Panc1 (cell line): ENCODE measurements at regions of chr5 and their contacts with region 1.

Region 1: DNA sequence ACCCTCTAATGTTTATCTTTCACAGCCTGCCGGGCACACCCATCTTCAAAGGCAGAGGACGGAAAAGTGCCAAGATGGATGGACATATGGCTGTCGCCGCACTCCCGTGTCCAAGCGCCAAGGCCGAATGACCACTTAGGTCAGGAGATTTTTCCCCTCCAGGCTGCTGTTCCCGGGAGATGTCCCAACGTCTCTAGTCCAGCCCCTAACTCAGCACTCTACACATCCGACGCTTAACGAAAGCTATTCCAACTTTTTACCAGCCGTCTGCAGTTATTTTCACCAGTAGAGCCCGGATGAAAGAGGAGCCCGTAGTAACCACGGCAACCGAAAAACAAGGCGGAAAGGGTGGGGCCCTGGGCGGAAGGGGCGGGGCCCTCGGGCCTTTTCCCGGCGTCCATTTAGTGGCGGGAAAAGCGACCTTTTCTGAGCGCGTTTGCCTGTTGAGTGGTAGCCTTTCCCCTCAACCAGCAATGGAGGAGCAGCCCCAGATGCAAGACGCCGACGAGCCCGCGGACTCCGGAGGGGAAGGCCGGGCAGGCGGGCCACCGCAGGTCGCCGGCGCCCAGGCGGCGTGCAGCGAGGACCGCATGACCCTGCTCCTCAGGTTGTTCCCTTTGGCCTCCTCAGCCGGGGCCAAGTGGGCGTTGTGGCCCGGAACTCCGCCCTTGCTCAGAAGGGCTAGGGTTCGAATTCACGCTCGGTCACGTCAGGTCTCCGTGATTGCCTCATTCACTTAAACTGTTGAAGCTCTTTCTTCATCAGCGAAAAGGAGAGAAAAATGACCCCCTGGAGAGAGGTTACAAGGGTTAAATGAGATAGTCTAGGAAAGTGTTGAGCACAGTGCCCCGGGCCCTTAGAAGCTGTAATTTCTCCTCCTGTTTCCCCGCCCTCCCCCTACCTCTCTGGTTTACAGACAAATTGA is at the start of gene CENPH:
- DNase-seq: peak; percentile 84
- ATAC-seq: peak; percentile 97
- H3K4me3 ChIP-seq: peak within 1 kb of the TSS; percentile 81 to 98
- H3K27ac ChIP-seq: peak within 1 kb of the TSS; percentile 94
- H3K4me1 ChIP-seq: peaks cover 3% of the 10 kb centered on the region; the same call in 1 of the 2 replicates
- H3K27me3 ChIP-seq: no peaks in the 10 kb centered on the region
- CTCF ChIP-seq: no peak
- total RNA-seq, gene CENPH: 35.6 TPM

Region 2: GRCh38 chr5:68950125-68950524 is 239.3 kb before region 1 on chr5:
- CTCF ChIA-PET with region 1: no interaction called
- POLR2A ChIA-PET with region 1: no interaction called
- in situ Hi-C with region 1: no loop called
- intact Hi-C with region 1: no loop called
- DNase-seq: no peak
- ATAC-seq: no peak
- H3K4me3 ChIP-seq: no peak overlapping the region
- H3K27ac ChIP-seq: no peak overlapping the region
- H3K4me1 ChIP-seq: no peaks in the 10 kb centered on the region
- H3K27me3 ChIP-seq: peaks cover 5% of the 10 kb centered on the region; the same call in 1 of the 2 replicates
- CTCF ChIP-seq: no peak

Region 3: GRCh38 chr5:69166686-69167492 is 22.5 kb before region 1 on chr5 and contains the start of gene CCNB1:
- CTCF ChIA-PET with region 1: no interaction called
- POLR2A ChIA-PET with region 1: interaction called, 12 read pairs
- in situ Hi-C with region 1: no loop called
- intact Hi-C with region 1: no loop called
- DNase-seq: peak; percentile 90
- ATAC-seq: peak; percentile 99
- H3K4me3 ChIP-seq: peak within 1 kb of the TSS; percentile 92 to 94
- H3K27ac ChIP-seq: peak within 1 kb of the TSS; percentile 96
- H3K4me1 ChIP-seq: peaks cover 20% of the 10 kb centered on the region
- H3K27me3 ChIP-seq: no peaks in the 10 kb centered on the region
- CTCF ChIP-seq: no peak
- total RNA-seq, gene CCNB1: 262 TPM

Region 4: GRCh38 chr5:69212022-69212421 is 22.6 kb after region 1 on chr5:
- CTCF ChIA-PET with region 1: interaction called, 3 read pairs
- POLR2A ChIA-PET with region 1: interaction called, 10 read pairs
- in situ Hi-C with region 1: no loop called
- intact Hi-C with region 1: no loop called
- DNase-seq: no peak
- ATAC-seq: no peak
- H3K4me3 ChIP-seq: no peak overlapping the region
- H3K27ac ChIP-seq: no peak overlapping the region
- H3K4me1 ChIP-seq: no peaks in the 10 kb centered on the region
- H3K27me3 ChIP-seq: no peaks in the 10 kb centered on the region
- CTCF ChIP-seq: no peak

Region 5: DNA sequence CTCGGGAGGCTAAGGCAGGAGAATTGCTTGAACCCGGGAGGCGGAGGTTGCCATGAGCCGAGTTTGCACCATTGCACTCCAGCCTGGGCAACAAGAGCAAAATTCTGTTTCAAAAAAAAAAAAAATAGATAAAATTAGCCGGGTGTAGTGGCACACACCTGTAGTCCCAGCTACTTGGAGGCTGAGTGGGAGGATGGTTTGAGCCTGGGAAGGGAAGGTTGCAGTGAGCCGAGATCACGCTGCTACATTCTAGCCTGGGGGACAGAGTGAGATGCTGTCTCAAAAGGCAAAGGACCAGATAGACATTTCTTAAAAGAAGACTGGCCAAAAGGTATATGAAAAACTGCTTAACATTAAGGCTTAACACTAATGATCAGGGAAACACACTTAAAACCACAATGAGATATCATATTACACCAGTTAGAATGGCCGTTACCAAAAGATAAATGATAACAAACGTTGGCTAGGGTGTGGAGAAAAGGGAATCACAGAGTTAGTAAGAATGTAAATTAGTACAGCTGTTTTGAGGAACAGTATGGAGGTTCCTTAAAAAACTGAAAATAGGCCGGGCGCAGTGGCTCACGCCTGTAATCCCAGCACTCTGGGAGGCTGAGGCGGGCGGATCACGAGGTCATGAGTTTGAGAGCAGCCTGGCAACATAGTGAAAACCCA is 215.4 kb after region 1 on chr5:
- CTCF ChIA-PET with region 1: no interaction called
- POLR2A ChIA-PET with region 1: interaction called, 14 read pairs
- in situ Hi-C with region 1: no loop called
- intact Hi-C with region 1: no loop called
- DNase-seq: no peak
- ATAC-seq: no peak
- H3K4me3 ChIP-seq: no peak overlapping the region
- H3K27ac ChIP-seq: no peak overlapping the region
- H3K4me1 ChIP-seq: no peaks in the 10 kb centered on the region
- H3K27me3 ChIP-seq: no peaks in the 10 kb centered on the region
- CTCF ChIP-seq: no peak